Activated CD4-positive, alpha-beta memory T cell treated with anti-CD3 and anti-CD28 coated beads, Interleukin-2, amount 10 ng/mL, durations not matched to agents 7 days and 5 days (primary cell): ENCODE measurements at regions of chr11 and their contacts with region 1.

Region 1: GRCh38 chr11:130131961-130132850 is 27.4 kb upstream of the ST14 start:
- DNase-seq: peak; percentile 49
- H3K4me3 Mint-ChIP-seq: no peak overlapping the region
- H3K27ac Mint-ChIP-seq: no peak overlapping the region
- H3K4me1 Mint-ChIP-seq: no peaks in the 10 kb centered on the region
- H3K27me3 Mint-ChIP-seq: no peaks in the 10 kb centered on the region

Region 2: DNA sequence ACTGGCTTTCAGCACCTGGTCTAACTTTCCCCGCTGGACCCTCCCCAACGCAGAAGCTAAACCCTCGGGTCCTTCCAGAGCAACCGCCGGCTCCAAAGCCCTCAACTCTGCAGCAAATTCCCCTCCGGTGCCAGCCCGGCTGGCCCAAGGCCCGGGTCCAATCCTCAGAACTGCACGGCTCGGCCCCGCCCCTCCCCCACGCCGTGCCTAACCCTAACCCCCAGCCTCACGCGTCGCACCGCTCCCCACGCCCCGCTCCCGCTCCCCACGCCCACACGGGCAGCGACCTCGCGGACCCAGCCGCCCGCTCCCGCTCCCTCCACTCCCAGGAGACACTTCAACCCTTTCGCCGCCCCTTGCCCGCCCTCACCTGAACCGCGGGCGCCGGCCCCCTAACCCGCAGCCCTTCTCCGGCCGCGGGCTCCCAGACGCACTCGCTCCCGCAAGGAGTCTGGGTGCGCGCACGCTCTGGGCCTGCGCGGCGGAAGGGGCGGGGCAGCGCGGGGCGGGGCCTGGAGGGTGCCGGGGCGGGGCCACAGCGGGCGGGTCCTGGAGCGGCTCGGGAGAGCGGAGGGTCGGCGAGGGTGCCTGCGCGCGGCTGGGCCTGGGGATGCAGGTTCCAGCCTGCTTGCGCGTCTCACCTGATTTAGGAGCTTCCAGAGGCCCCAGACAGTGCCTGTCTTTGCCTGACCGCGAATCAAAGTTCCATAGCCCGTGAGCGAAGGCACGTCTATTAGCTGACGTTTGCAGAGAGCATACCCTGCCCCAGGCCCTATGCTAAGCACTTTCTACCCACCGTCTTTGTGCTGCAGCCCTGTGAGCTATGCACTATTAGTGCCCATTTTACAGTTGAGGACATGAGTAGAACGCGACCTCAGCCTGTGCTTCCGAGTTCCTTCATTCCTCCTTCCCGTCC is 236.8 kb before region 1 on chr11 and contains the start of gene NFRKB:
- CTCF ChIA-PET with region 1: interaction called, 13 read pairs
- POLR2A ChIA-PET with region 1: no interaction called
- DNase-seq: peak; percentile 89
- H3K4me3 Mint-ChIP-seq: peak within 1 kb of the TSS; percentile 90
- H3K27ac Mint-ChIP-seq: peak within 1 kb of the TSS; percentile 77
- H3K4me1 Mint-ChIP-seq: peaks cover 34% of the 10 kb centered on the region
- H3K27me3 Mint-ChIP-seq: peaks cover 3% of the 10 kb centered on the region
- total RNA-seq, gene NFRKB: 39.2 to 44.9 TPM

Region 3: GRCh38 chr11:129992161-129992944 is 139.9 kb before region 1 on chr11:
- CTCF ChIA-PET with region 1: interaction called, 14 read pairs
- POLR2A ChIA-PET with region 1: no interaction called
- DNase-seq: peak; percentile 40
- H3K4me3 Mint-ChIP-seq: no peak overlapping the region
- H3K27ac Mint-ChIP-seq: no peak overlapping the region
- H3K4me1 Mint-ChIP-seq: peaks cover 6% of the 10 kb centered on the region
- H3K27me3 Mint-ChIP-seq: no peaks in the 10 kb centered on the region

Region 4: DNA sequence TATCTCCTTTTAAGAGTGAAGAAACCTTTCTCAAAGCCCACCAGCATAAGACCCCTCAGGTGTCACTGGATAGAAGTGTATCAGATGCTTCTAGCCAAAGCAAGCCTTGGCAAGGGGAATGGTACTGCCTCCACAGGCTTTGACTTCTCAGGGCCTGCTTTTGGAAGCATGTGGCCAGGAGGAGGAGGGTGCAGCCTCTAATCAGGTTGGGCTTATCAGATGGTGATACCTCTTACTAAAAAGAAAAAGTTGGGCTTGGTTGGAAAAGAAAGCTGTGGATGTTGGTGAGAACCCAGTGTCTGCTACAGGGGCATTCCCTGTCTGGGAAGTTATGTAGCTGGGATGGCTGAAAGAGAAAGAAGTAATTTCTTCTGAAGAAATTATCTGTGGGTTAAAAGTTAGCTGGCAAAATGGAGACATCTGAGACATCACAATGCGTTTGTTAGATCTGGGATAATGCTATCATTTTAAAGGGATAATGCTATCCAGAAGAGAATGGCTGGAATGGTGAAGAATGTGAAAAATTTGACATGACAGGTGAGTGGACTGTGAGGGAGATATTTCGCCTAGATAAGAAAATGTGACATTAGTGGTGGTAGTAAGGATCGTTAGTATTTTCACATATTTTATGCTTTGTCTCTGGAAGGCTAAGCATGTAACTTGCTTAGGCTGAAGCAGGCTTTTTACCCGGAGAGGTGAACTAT is 55.3 kb before region 1 on chr11:
- CTCF ChIA-PET with region 1: interaction called, 12 read pairs
- POLR2A ChIA-PET with region 1: no interaction called
- DNase-seq: no peak
- H3K4me3 Mint-ChIP-seq: no peak overlapping the region
- H3K27ac Mint-ChIP-seq: no peak overlapping the region
- H3K4me1 Mint-ChIP-seq: peaks cover 3% of the 10 kb centered on the region
- H3K27me3 Mint-ChIP-seq: peaks cover 6% of the 10 kb centered on the region

Region 5: GRCh38 chr11:130145975-130146776 is 14.0 kb after region 1 on chr11:
- CTCF ChIA-PET with region 1: interaction called, 15 read pairs
- POLR2A ChIA-PET with region 1: no interaction called
- DNase-seq: no peak
- H3K4me3 Mint-ChIP-seq: no peak overlapping the region
- H3K27ac Mint-ChIP-seq: no peak overlapping the region
- H3K4me1 Mint-ChIP-seq: peaks cover 11% of the 10 kb centered on the region
- H3K27me3 Mint-ChIP-seq: no peaks in the 10 kb centered on the region

Region 6: GRCh38 chr11:130359419-130359818 is 227.2 kb after region 1 on chr11:
- CTCF ChIA-PET with region 1: no interaction called
- POLR2A ChIA-PET with region 1: no interaction called
- DNase-seq: no peak
- H3K4me3 Mint-ChIP-seq: no peak overlapping the region
- H3K27ac Mint-ChIP-seq: no peak overlapping the region
- H3K4me1 Mint-ChIP-seq: no peaks in the 10 kb centered on the region
- H3K27me3 Mint-ChIP-seq: peaks cover 10% of the 10 kb centered on the region